ENCODE measurements at regions of chr1 and their contacts with region 1.

Region 1: DNA sequence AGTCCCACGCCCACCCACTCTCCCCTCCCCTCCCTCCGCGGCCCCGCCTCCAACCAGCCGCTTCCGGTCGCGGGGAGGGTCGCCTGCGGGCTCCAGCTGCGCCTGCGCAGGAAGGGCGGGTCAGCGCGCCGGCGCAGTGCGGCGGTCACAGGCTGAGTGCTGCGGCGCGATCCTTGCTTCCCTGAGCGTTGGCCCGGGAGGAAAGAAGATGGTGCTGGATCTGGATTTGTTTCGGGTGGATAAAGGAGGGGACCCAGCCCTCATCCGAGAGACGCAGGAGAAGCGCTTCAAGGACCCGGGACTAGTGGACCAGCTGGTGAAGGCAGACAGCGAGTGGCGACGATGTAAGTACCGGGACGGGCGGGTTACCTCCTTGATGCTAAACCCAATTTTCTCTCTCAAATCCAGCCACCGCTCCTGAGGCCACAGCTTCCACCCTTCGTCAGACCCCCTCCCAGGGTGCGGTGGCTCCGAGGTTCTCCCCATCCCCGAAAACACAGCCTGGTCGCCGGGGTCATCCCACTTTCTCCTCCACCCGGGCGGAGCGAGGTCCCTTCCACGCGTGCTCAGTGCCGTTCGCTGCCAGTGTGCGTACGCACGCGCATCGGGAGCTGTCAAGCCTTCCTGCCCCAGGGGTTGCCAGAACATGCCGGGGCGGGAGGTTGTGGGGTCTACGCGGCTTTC is at the start of gene SARS1:
- DNase-seq: peak; percentile 93
- H3K4me3 ChIP-seq: peak within 1 kb of the TSS; percentile 82
- H3K27ac ChIP-seq: peak within 1 kb of the TSS; percentile 73
- H3K4me1 ChIP-seq: peaks cover 34% of the 10 kb centered on the region
- CTCF ChIP-seq: no peak
- total RNA-seq, gene SARS1: 277 and 295 TPM in 2 replicates

Region 2: DNA sequence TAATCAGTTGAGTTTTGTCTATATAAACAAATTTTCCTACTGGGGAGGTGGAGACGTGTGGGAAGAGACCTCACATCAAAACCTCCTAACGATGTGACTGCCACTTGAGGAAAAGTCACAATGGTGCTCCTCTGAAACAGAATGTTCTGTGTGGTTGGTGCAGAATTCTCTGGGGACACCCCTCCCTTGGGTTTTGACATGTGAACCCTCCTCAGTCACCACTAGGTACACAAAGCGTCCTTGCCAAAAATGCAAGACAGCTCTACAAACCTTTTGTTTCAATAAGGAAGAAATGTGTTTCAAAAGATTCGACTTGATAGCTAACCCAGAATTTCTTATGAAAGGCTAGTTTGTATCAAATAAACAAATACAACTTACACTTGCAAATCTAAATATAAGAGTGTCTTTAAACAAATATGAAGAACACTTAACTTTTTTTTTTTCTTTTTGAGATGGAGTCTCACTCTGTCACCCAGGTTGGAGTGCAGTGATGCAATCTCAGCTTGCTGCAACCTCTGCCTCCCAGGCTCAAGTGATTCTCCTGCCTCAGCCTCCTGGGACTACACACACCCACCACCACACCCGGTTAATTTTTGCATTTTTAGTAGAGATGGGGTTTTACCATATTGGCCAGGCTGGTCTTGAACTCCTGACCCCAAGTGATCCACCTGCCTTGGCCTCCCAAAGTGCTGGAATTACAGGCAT is 1023.1 kb before region 1 on chr1:
- CTCF ChIA-PET with region 1: no interaction called
- POLR2A ChIA-PET with region 1: no interaction called
- intact Hi-C with region 1: no loop called
- DNase-seq: peak; percentile 4
- H3K4me3 ChIP-seq: no peak overlapping the region
- H3K27ac ChIP-seq: no peak overlapping the region
- H3K4me1 ChIP-seq: no peaks in the 10 kb centered on the region
- CTCF ChIP-seq: no peak

Region 3: DNA sequence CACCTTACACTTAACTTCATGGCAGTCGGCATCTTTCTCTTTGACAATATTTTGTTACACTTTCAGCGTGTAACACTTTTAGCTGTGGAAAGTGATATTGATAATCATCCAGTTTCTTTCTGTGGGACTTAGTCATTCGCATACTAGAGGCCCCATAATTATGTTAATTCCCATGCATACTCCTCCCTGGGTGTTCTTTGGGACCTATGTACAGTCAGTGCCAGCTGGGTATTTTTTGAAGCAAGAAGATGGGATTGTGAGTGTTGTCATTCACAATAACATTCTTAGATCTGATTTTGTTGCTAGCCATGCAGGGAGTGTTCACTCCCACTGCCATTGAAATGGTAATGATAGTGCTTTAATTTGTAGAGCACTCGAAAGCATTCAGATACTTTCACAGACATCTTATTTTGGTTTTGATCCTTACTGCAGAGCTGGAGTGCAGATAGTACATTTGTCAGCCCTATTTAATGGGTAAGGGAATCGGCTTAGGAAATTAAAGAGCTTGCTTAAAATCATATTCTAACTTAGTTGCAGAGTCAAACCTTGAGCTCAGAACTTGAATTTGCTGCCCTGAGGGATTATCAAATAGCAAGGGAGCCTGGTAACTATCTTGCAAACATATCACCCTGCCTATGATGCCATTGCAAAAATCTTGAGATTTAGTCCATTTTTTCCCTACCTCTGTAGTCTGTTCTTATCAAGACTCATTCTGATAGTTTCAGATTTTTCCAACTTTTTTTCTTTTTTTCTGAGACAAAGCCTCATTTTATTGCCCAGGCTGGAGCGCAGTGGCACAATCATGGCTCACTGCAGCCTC is 11.5 kb after region 1 on chr1:
- CTCF ChIA-PET with region 1: no interaction called
- POLR2A ChIA-PET with region 1: interaction called, 14 read pairs
- intact Hi-C with region 1: no loop called
- DNase-seq: no peak
- H3K4me3 ChIP-seq: no peak overlapping the region
- H3K27ac ChIP-seq: no peak overlapping the region
- H3K4me1 ChIP-seq: no peaks in the 10 kb centered on the region
- CTCF ChIP-seq: no peak